OCI-LY7 (cell line): ENCODE measurements at regions of chr3 and their contacts with region 1.

Region 1: GRCh38 chr3:46208167-46208704 is at the start of gene CCR1:
- DNase-seq: peak; percentile 32
- H3K4me3 ChIP-seq: no peak within 1 kb of the TSS
- H3K27ac ChIP-seq: no peak within 1 kb of the TSS
- H3K4me1 ChIP-seq: no peaks in the 10 kb centered on the region
- CTCF ChIP-seq: peak; percentile 65
- total RNA-seq, gene CCR1: not detected in 2 replicates

Region 2: GRCh38 chr3:45938864-45939263 is 269.4 kb before region 1 on chr3:
- CTCF ChIA-PET with region 1: no interaction called
- POLR2A ChIA-PET with region 1: no interaction called
- intact Hi-C with region 1: no loop called
- DNase-seq: peak; percentile 80
- H3K4me3 ChIP-seq: no peak overlapping the region
- H3K27ac ChIP-seq: no peak overlapping the region
- H3K4me1 ChIP-seq: no peaks in the 10 kb centered on the region
- CTCF ChIP-seq: peak; percentile 86

Region 3: GRCh38 chr3:46038916-46039315 is 169.3 kb before region 1 on chr3:
- CTCF ChIA-PET with region 1: no interaction called
- POLR2A ChIA-PET with region 1: no interaction called
- intact Hi-C with region 1: no loop called
- DNase-seq: no peak
- H3K4me3 ChIP-seq: no peak overlapping the region
- H3K27ac ChIP-seq: no peak overlapping the region
- H3K4me1 ChIP-seq: no peaks in the 10 kb centered on the region
- CTCF ChIP-seq: no peak

Region 4: GRCh38 chr3:46089237-46090011 is 118.8 kb before region 1 on chr3:
- CTCF ChIA-PET with region 1: no interaction called
- POLR2A ChIA-PET with region 1: no interaction called
- intact Hi-C with region 1: loop called (anchors 1 kb)
- DNase-seq: no peak
- H3K4me3 ChIP-seq: no peak overlapping the region
- H3K27ac ChIP-seq: no peak overlapping the region
- H3K4me1 ChIP-seq: peaks cover 36% of the 10 kb centered on the region
- CTCF ChIP-seq: no peak